Activated CD8-positive, alpha-beta T cell treated with anti-CD3 and anti-CD28 coated beads for 36 hours (primary cell): ENCODE measurements at regions of chr12 and their contacts with region 1.

Region 1: GRCh38 chr12:9813821-9814809 is 13.2 kb upstream of the KLRF1 start:
- DNase-seq: peak; percentile 94
- ATAC-seq: peak; percentile 98
- H3K4me3 Mint-ChIP-seq: peak overlapping the region; percentile 85
- H3K27ac Mint-ChIP-seq: peak overlapping the region; percentile 55
- H3K4me1 Mint-ChIP-seq: peaks cover 14% of the 10 kb centered on the region
- H3K27me3 Mint-ChIP-seq: peaks cover 4% of the 10 kb centered on the region
- CTCF ChIP-seq: peak; percentile 94

Region 2: DNA sequence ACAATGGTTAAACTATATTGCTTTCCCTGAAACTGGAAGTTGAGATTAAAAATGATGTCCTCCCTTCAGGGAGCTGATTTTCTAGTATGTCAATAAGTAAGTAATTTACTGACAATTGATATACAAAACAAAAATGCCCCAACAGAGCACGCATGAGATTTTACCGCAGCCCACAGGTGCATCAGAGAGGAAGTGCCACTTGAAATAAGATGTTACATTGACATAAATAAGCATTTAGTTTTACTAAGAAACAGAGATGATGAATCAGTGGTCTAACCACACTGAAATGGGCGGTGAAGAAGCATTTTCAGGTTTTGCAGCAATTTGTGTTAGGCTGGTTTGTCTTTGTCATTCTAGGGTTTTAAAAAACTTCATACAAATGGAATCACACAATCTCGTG is 72.4 kb before region 1 on chr12:
- CTCF ChIA-PET with region 1: interaction called, 219 read pairs
- POLR2A ChIA-PET with region 1: interaction called, 4 read pairs
- intact Hi-C with region 1: no loop called
- DNase-seq: peak; percentile 95
- ATAC-seq: peak; percentile 69
- H3K4me3 Mint-ChIP-seq: peak overlapping the region; percentile 74
- H3K27ac Mint-ChIP-seq: peak overlapping the region; percentile 90
- H3K4me1 Mint-ChIP-seq: peaks cover 71% of the 10 kb centered on the region
- H3K27me3 Mint-ChIP-seq: no peaks in the 10 kb centered on the region
- CTCF ChIP-seq: no peak

Region 3: DNA sequence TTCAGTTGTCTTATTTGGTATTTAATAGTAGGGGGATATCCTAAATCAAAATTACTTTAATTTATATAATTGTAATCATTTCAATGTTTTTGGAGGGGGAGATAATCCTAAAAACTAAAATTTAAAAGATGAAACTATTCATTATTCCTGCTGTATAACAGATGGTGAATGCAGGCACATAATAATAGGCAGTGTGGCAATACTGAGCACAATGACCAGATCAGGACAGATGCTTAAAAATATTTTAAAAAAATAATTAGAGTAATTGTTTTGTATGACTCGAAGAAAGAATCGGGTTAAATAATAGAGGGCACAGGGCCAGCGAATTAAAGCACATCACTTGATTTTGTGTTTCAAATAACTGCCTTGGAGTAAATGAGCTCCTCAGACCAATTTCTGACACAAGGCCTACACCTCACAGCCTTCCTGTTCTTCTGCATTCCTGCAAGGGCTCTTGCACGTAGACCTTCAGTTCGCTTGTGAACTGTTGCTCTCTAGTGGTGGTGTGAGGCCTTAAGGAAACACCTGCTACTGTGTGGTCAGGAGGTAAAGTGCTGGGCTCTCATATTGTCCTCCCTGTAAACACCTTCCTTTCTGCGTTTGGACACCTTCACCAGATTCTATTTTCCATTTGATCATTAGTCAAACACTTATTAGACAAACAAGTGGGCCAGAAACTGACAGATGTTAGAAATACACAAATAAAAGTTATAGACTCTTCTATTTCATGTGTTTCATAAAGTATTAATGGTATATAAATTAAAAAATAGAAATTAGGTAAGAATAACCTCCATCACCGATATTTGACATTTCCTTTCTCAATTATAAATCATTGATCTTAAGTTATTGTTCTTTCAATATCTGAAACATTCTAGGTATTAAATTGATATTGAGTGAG is 16.1 kb before region 1 on chr12:
- CTCF ChIA-PET with region 1: interaction called, 54 read pairs
- POLR2A ChIA-PET with region 1: interaction called, 3 read pairs
- intact Hi-C with region 1: no loop called
- DNase-seq: peak; percentile 84
- ATAC-seq: peak; percentile 83
- H3K4me3 Mint-ChIP-seq: peak overlapping the region; percentile 74
- H3K27ac Mint-ChIP-seq: peak overlapping the region; percentile 86
- H3K4me1 Mint-ChIP-seq: peaks cover 47% of the 10 kb centered on the region
- H3K27me3 Mint-ChIP-seq: no peaks in the 10 kb centered on the region
- CTCF ChIP-seq: peak; percentile 80

Region 4: GRCh38 chr12:9851927-9852326 is 37.8 kb after region 1 on chr12:
- CTCF ChIA-PET with region 1: interaction called, 13 read pairs
- POLR2A ChIA-PET with region 1: no interaction called
- intact Hi-C with region 1: no loop called
- DNase-seq: peak; percentile 32
- ATAC-seq: peak; percentile 49
- H3K4me3 Mint-ChIP-seq: no peak overlapping the region
- H3K27ac Mint-ChIP-seq: no peak overlapping the region
- H3K4me1 Mint-ChIP-seq: peaks cover 44% of the 10 kb centered on the region
- H3K27me3 Mint-ChIP-seq: no peaks in the 10 kb centered on the region
- CTCF ChIP-seq: no peak

Region 5: DNA sequence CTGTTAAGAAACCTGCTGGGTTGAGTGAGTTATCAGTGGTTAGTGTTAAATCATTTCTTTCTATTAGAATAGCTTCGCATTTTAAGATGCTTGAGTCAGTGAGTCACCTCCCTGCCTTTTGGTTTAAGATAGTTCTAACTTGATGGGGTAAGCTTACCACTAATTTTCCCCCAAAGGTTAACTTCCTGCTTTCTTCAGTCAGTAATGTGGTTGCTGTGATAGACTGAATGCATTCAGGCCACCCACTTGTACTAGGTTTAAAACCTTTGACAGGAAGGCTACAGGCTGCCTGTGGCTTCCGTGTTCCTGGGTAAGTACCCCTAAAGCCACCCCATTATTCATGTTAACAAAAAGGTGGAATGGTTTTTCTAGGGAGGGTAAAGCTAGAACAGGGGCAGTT is 92.8 kb after region 1 on chr12:
- CTCF ChIA-PET with region 1: interaction called, 15 read pairs
- POLR2A ChIA-PET with region 1: interaction called, 4 read pairs
- intact Hi-C with region 1: no loop called
- DNase-seq: peak; percentile 55
- ATAC-seq: peak; percentile 98
- H3K4me3 Mint-ChIP-seq: peak overlapping the region; percentile 6
- H3K27ac Mint-ChIP-seq: peak overlapping the region; percentile 78
- H3K4me1 Mint-ChIP-seq: peaks cover 30% of the 10 kb centered on the region
- H3K27me3 Mint-ChIP-seq: no peaks in the 10 kb centered on the region
- CTCF ChIP-seq: no peak

Region 6: DNA sequence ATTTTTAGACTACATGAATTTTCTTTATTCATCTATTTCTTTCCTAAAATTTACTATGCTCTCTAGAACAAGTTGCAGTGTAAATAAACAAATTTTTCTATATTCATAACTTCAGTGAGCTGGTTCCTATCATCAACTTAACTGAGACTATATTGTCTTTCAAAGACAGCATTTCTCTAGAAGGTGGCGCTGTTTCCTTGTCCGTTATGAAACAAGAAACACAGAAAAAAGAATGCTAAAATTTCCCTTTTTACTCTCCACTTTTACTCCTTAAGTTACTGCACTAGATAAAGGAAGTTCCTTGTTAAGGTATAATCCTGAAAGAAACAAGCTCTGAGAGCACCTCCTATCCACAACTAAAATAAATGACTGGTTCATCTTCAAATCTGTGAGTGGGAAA is 126.3 kb after region 1 on chr12:
- CTCF ChIA-PET with region 1: interaction called, 23 read pairs
- POLR2A ChIA-PET with region 1: no interaction called
- intact Hi-C with region 1: no loop called
- DNase-seq: peak; percentile 25
- ATAC-seq: no peak
- H3K4me3 Mint-ChIP-seq: no peak overlapping the region
- H3K27ac Mint-ChIP-seq: no peak overlapping the region
- H3K4me1 Mint-ChIP-seq: peaks cover 6% of the 10 kb centered on the region
- H3K27me3 Mint-ChIP-seq: peaks cover 2% of the 10 kb centered on the region
- CTCF ChIP-seq: peak; percentile 47

Region 7: DNA sequence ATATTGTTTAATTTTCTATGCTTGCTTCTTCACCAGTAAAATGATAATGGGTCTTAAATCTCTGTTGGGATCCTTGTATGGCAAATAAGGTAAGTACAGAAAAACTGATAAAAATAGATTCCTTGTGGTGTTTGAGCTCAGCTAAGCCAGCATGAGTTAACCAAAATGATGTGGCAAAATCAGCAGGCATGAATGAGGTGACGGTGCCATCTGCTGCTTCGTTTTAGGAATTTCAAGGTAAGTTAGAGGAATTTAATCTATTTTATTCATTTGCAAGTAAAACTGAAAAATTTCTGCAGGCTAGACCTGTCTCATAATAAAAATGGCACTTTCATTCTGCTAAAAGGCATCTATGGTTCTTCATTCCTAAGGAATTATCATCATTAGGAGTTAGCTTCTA is 325.9 kb after region 1 on chr12:
- CTCF ChIA-PET with region 1: interaction called, 14 read pairs
- POLR2A ChIA-PET with region 1: no interaction called
- intact Hi-C with region 1: loop called (anchors 5 kb)
- DNase-seq: peak; percentile 66
- ATAC-seq: peak; percentile 49
- H3K4me3 Mint-ChIP-seq: no peak overlapping the region
- H3K27ac Mint-ChIP-seq: no peak overlapping the region
- H3K4me1 Mint-ChIP-seq: peaks cover 2% of the 10 kb centered on the region
- H3K27me3 Mint-ChIP-seq: peaks cover 6% of the 10 kb centered on the region
- CTCF ChIP-seq: peak; percentile 66